Activated B cell treated with CpG ODN at 0.5 μM for 24 hours (primary cell): ENCODE measurements at regions of chr6 and their contacts with region 1.

Region 1: GRCh38 chr6:127516666-127517273 is 2.4 kb downstream of the MTCL3 start:
- DNase-seq: no peak
- ATAC-seq: peak; percentile 41
- H3K4me3 Mint-ChIP-seq: peak overlapping the region; percentile 86
- H3K27ac Mint-ChIP-seq: peak overlapping the region; percentile 35
- H3K4me1 Mint-ChIP-seq: peaks cover 28% of the 10 kb centered on the region
- H3K27me3 Mint-ChIP-seq: peaks cover 46% of the 10 kb centered on the region
- CTCF ChIP-seq: no peak

Region 2: GRCh38 chr6:125749173-125749864 is 1767.5 kb before region 1 on chr6 and contains the start of gene HEY2:
- CTCF ChIA-PET with region 1: no interaction called
- POLR2A ChIA-PET with region 1: no interaction called
- intact Hi-C with region 1: loop called (anchors 2 kb)
- DNase-seq: peak; percentile 92
- ATAC-seq: peak; percentile 91
- H3K4me3 Mint-ChIP-seq: peak within 1 kb of the TSS; percentile 81
- H3K27ac Mint-ChIP-seq: peak within 1 kb of the TSS; percentile 61
- H3K4me1 Mint-ChIP-seq: peaks cover 40% of the 10 kb centered on the region
- H3K27me3 Mint-ChIP-seq: peaks cover 46% of the 10 kb centered on the region
- CTCF ChIP-seq: no peak
- total RNA-seq, gene HEY2: not detected in 2 replicates

Region 3: DNA sequence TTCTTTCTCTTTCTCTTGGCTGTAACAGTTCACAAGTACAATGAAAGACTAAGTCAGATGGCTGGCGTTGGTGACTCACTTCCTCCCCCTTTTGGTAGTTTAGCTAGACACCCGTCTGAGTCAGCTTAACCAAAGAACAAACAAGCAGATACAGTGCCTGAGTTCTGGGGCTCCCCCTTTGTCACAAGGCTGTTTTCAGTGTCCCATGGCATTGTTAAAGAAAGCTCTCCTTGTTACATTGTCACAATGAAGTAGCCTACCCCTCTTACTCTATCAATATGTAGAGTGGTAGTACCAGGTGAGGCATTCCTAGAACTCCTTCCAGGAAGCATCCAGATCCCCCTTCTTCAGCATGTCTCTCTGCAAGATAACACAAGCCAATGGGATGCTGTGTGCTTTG is 96.2 kb before region 1 on chr6:
- CTCF ChIA-PET with region 1: no interaction called
- POLR2A ChIA-PET with region 1: no interaction called
- intact Hi-C with region 1: no loop called
- DNase-seq: no peak
- ATAC-seq: peak; percentile 99
- H3K4me3 Mint-ChIP-seq: peak overlapping the region; percentile 28
- H3K27ac Mint-ChIP-seq: no peak overlapping the region
- H3K4me1 Mint-ChIP-seq: peaks cover 21% of the 10 kb centered on the region
- H3K27me3 Mint-ChIP-seq: no peaks in the 10 kb centered on the region
- CTCF ChIP-seq: no peak

Region 4: DNA sequence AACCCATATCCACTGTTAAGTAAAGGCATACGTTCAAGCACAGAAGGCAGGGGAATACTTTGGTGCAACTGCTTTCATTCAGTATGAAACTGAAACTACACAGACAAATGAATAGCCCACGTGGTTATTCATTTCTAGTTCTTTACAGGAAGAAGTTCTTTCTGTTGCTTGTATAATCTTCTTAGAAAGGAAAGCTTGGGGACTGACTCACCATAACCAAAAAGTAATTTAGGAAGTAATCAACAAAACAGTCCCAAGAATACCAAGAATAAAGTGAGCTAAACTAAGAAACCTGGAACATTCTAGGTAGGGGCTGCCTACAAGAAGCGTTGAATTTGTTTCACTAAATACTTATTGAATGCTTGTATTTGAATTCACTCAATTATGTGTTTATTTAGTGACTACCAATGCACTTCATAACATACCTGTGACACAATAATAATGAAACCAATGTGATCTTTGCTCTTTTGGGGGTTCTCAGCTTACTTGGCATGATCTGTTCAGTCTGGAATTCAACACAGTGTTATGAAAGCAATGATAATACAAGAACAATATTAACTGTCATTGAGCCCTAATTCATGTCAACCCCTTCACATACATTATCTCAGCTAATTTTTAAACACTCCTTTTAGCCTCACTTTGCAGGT is 32.4 kb before region 1 on chr6:
- CTCF ChIA-PET with region 1: no interaction called
- POLR2A ChIA-PET with region 1: no interaction called
- intact Hi-C with region 1: loop called (anchors 1 kb)
- DNase-seq: no peak
- ATAC-seq: peak; percentile 76
- H3K4me3 Mint-ChIP-seq: peak overlapping the region; percentile 39
- H3K27ac Mint-ChIP-seq: no peak overlapping the region
- H3K4me1 Mint-ChIP-seq: peaks cover 13% of the 10 kb centered on the region
- H3K27me3 Mint-ChIP-seq: peaks cover 2% of the 10 kb centered on the region
- CTCF ChIP-seq: no peak